ENCODE measurements at regions of chr1 and their contacts with region 1.

Region 1: DNA sequence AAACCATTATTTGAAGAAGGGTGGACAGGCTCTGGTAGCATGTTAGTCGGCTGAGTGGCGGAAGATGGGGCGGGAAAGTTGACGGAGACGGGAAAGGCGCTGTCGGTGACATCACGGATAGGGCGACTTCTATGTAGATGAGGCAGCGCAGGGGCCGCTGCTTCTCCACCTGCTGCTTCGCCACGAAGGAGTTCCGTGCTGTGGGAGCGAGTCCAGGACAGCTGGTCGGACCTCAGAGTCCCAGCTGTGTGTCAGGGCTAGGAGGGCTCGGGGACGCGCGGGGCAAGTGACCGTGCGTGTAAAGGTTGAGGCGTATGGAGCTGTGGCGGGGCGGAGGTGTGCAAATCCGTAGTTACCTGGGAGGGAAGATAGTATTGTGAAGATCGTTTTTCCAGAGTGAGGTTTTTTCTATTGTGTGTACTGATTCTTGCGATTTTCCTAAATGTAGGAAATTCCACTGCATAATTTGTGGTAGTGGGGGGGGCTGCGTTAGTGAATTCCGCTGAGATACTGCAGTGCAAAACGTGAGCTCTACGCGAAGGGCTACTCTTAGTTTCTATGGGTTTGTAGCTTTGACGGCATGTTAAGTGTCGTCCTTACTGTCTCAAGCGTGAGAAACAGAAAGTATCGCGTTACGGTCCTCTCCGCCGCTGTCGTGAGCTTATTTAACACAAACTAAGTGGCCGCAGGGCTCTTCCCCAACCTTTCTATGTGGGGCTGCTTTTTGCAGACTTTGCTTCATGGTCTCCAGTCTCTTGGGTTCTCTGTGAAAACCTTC is 111.2 kb upstream of the NBPF11 start:
- DNase-seq: peak; percentile 65
- H3K4me3 Mint-ChIP-seq: peak overlapping the region; percentile 80
- H3K27ac Mint-ChIP-seq: peak overlapping the region; percentile 97
- H3K4me1 Mint-ChIP-seq: peaks cover 23% of the 10 kb centered on the region
- H3K27me3 Mint-ChIP-seq: peaks cover 36% of the 10 kb centered on the region
- CTCF ChIP-seq: no peak

Region 2: GRCh38 chr1:148334339-148335130 is 71.2 kb after region 1 on chr1:
- CTCF ChIA-PET with region 1: no interaction called
- intact Hi-C with region 1: loop called (anchors 10 kb)
- DNase-seq: peak; percentile 84
- H3K4me3 Mint-ChIP-seq: peak overlapping the region; percentile 75
- H3K27ac Mint-ChIP-seq: peak overlapping the region; percentile 95
- H3K4me1 Mint-ChIP-seq: peaks cover 12% of the 10 kb centered on the region
- H3K27me3 Mint-ChIP-seq: peaks cover 31% of the 10 kb centered on the region
- CTCF ChIP-seq: no peak

Measured in Calu3 (cell line).